Left cardiac atrium (tissue), 4 donors: ENCODE measurements at regions of chr10 and their contacts with region 1.

Region 1: DNA sequence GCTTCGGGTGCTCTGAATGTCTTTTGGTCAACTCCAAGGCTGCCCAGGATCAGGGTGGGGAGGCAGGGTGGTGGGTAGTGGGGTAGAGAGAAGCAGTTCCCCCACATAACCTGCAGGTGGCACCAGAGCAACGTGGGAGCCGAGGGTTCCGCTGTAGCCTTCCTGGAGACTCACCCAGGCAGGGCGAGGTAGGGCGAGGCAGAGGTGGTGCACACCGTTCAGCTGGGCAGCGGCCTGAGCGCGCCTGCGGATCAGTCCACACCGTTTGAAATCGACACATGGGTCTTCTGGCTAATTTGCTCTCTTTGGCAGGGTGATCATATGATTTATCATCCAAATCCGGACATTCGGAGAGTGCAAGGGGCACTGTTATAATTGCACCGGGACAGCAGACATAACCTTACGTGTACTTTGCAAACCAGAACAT is 41.4 kb upstream of the MAP3K8 start:
- DNase-seq: peak; percentile 77
- ATAC-seq: peak; percentile 98

Region 2: GRCh38 chr10:30330497-30331168 is 61.9 kb before region 1 on chr10:
- intact Hi-C with region 1: no loop called
- DNase-seq: no peak
- ATAC-seq: no peak

Region 3: GRCh38 chr10:30472414-30473155 is 80.0 kb after region 1 on chr10:
- intact Hi-C with region 1: no loop called
- DNase-seq: no peak
- ATAC-seq: no peak

Region 4: DNA sequence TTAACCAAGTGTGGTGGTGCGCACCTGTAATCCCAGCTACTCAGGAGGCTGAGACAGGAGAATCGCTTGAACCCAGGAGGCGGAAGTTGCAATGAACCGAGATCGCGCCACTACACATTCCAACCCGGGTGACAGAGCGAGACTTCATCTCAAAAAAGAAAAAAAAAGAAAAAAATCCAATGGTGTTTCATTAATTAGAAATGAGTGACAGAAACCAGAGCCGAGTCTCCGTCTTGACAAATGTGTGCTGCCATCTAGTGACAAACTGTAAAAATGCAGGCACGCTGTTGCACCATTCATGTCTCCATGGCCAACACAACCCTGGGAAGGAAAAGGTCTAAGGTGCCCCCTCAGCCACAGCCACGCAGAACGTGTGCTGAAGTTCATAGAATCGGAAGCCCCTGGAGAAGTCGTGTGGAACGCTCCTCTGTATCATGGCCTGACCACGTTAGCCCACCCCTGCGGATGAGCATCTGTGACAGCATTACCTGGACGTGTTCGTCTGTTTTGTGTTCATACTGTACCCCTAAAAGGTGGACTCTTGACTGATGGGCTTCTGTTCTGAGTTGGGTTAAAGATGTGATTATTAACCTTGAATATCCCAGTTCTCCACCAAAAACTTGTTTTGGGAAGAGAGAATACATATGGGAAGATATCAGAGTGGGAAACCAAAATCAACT is 142.0 kb after region 1 on chr10:
- intact Hi-C with region 1: loop called in 1 of 2 experiments (anchors 2 kb)
- DNase-seq: peak; percentile 67
- ATAC-seq: peak; percentile 65 to 68

Region 5: GRCh38 chr10:30591249-30591670 is 198.7 kb after region 1 on chr10:
- intact Hi-C with region 1: loop called (anchors 2 to 5 kb)
- DNase-seq: peak; percentile 25
- ATAC-seq: peak; percentile 59 to 64